CD14-positive monocyte (primary cell): ENCODE measurements at regions of chr7 and their contacts with region 1.

Region 1: DNA sequence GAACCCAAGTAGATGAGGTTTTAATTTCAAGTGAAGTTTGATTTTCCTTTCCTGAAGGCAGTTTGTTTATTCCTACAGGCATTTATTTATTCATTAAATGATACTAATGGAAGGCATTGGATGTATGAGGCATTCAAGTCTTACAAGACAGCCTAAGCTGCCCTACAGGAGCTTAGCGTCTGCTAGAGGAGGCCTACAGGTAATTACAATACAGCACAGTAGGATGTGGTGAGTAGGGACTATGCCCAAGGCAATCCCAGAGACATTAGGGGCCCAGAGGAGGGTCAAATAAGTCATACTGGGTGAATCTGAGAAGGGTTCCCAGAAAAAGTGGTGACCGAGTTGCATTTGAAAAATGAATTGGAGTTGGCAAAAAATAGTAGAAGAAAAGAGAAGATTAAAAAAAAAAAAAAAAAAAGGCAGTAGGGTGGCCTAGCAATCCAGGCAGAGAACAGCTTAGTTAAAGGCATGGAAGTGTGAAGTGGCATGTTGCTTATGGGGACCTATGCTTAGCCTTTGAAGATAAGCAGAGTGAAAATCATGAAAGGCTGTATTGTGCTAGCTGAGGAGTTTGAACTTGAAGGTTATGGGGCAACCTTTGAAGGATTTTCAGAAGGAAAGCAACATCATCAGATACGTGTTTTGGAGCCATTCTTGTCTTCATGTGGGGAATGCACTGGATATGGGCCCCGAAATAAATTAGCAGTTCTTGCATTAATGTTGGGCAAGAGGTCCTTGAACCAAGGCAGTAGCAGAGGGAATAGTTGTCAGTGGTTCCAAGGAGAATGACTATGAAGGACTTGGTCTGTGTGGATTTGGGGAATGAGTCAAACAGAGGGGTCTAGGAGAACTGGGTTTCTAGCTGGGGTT is 65.5 kb downstream of the SNX10 start:
- DNase-seq: no peak
- H3K4me3 ChIP-seq: no peak overlapping the region
- H3K4me3 Mint-ChIP-seq: no peak overlapping the region
- H3K27ac ChIP-seq: peak overlapping the region in 1 of 2 donors; percentile 26
- H3K27ac Mint-ChIP-seq: peak overlapping the region in 2 of 7 donors; percentile 27 to 38
- H3K4me1 ChIP-seq: peaks cover 16 to 22% of the 10 kb centered on the region in 2 donors
- H3K4me1 Mint-ChIP-seq: peaks cover 30% of the 10 kb centered on the region
- H3K27me3 ChIP-seq: no peaks in the 10 kb centered on the region
- H3K27me3 Mint-ChIP-seq: no peaks in the 10 kb centered on the region
- CTCF ChIP-seq: no peak

Region 2: DNA sequence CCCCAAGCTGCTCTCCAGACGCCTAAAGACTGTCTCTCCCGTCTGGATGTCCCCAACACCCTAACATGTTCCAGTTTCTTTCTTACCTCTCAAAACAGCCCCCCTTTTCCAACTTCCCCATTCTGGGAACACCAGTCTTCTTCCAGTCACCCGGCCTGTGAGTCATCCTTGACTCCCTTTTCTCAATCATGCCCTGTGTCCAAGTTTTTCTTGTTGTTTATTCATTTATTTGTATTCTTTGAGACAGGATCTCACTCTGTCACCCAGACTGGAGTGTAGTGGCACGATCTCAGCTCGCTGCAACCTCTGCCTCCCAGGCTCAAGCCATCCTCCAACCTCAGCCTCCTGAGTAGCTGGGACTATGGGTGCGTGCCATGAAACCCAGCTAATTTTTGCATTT is 49.9 kb before region 1 on chr7:
- intact Hi-C with region 1: loop called in 1 of 2 experiments (anchors 10 kb)
- DNase-seq: peak; percentile 82 to 97 (median 95)
- H3K4me3 ChIP-seq: peak overlapping the region in 1 of 3 experiments; percentile 67
- H3K4me3 Mint-ChIP-seq: peak overlapping the region; percentile 42 to 87
- H3K27ac ChIP-seq: peak overlapping the region; percentile 95 to 98
- H3K27ac Mint-ChIP-seq: peak overlapping the region; percentile 94 to 99 (median 98)
- H3K4me1 ChIP-seq: peaks cover 87 to 97% of the 10 kb centered on the region in 2 donors
- H3K4me1 Mint-ChIP-seq: peaks cover 95% of the 10 kb centered on the region
- H3K27me3 ChIP-seq: no peaks in the 10 kb centered on the region
- H3K27me3 Mint-ChIP-seq: peaks cover 0 to 3% (median 0%) of the 10 kb centered on the region in 3 donors
- CTCF ChIP-seq: no peak